ENCODE measurements at regions of chr11 and their contacts with region 1.

Region 1: GRCh38 chr11:8006349-8006977 is 19.3 kb downstream of the EIF3F start:
- DNase-seq: peak; percentile 62
- H3K4me3 ChIP-seq: no peak overlapping the region
- H3K27ac ChIP-seq: no peak overlapping the region
- H3K4me1 ChIP-seq: no peaks in the 10 kb centered on the region
- CTCF ChIP-seq: peak; percentile 96

Region 2: DNA sequence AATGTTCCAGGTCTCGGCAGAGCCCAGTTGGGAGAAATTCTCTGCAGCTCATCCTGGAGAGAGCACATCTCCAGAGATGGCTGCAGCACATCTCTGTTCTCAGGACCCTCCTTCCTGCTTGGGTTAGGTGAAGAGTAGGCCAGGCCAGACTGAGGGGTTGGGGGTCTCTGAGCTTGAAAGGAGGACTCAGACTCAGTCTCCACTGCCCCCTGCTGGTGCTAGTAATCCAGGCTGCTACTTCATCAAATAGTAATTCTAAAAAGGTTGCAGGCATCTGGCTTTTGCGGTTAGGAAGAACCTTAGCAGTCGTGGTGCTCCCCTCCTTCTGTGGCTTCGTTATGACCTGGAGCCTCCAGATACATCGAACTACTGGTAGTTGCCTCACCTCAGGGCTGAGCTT is 84.3 kb after region 1 on chr11:
- CTCF ChIA-PET with region 1: interaction called, 4 read pairs
- POLR2A ChIA-PET with region 1: no interaction called
- intact Hi-C with region 1: loop called (anchors 2 kb)
- DNase-seq: peak; percentile 51
- H3K4me3 ChIP-seq: no peak overlapping the region
- H3K27ac ChIP-seq: no peak overlapping the region
- H3K4me1 ChIP-seq: peaks cover 5% of the 10 kb centered on the region
- CTCF ChIP-seq: peak; percentile 75

Region 3: GRCh38 chr11:8099291-8099899 is 92.9 kb after region 1 on chr11:
- CTCF ChIA-PET with region 1: interaction called, 10 read pairs
- POLR2A ChIA-PET with region 1: no interaction called
- intact Hi-C with region 1: loop called (anchors 1 kb)
- DNase-seq: peak; percentile 70
- H3K4me3 ChIP-seq: no peak overlapping the region
- H3K27ac ChIP-seq: no peak overlapping the region
- H3K4me1 ChIP-seq: no peaks in the 10 kb centered on the region
- CTCF ChIP-seq: peak; percentile 95

Region 4: GRCh38 chr11:8156877-8157276 is 150.4 kb after region 1 on chr11:
- CTCF ChIA-PET with region 1: no interaction called
- POLR2A ChIA-PET with region 1: no interaction called
- intact Hi-C with region 1: no loop called
- DNase-seq: no peak
- H3K4me3 ChIP-seq: no peak overlapping the region
- H3K27ac ChIP-seq: no peak overlapping the region
- H3K4me1 ChIP-seq: no peaks in the 10 kb centered on the region
- CTCF ChIP-seq: no peak